H1 (cell line): ENCODE measurements at regions of chr17 and their contacts with region 1.

Region 1: DNA sequence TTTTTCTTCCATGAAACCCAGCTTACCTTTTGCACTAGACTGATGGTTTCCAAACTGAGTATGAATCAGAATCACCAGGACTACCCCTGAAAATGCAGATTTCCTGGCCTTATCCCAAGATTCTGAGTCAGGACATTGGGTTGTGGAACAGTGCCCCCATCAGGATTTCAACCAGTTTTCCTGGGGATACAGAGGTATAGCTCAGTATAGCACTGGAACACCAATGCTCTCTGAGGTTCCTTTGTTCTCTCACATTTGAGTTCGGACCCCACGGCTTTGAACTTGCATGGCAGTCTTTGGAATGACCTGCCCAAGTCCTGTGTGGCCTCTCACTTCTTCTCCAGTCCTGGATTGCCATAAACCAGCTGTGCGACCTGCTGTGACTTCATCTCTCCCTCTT is 12.8 kb upstream of the CCL8 start:
- DNase-seq: peak; percentile 19 to 51
- H3K4me3 ChIP-seq: no peak overlapping the region
- H3K27ac ChIP-seq: no peak overlapping the region
- H3K4me1 ChIP-seq: no peaks in the 10 kb centered on the region
- H3K27me3 ChIP-seq: no peaks in the 10 kb centered on the region
- CTCF ChIP-seq: peak in 2 of 3 experiments; percentile 79 to 91; a peak in 3 of 4 replicates
- EP300 ChIP-seq: no peak
- POLR2A ChIP-seq: no peak
- RAD21 ChIP-seq: peak; percentile 90 to 93

Region 2: GRCh38 chr17:34318474-34318873 is 12.0 kb after region 1 on chr17:
- CTCF ChIA-PET with region 1: interaction called, 15 read pairs
- POLR2A ChIA-PET with region 1: no interaction called
- DNase-seq: peak in 1 of 2 experiments; percentile 56
- H3K4me3 ChIP-seq: no peak overlapping the region
- H3K27ac ChIP-seq: no peak overlapping the region
- H3K4me1 ChIP-seq: no peaks in the 10 kb centered on the region
- H3K27me3 ChIP-seq: no peaks in the 10 kb centered on the region
- CTCF ChIP-seq: peak; percentile 7 to 43 (median 39); a peak in 3 of 4 replicates
- EP300 ChIP-seq: no peak
- POLR2A ChIP-seq: no peak
- RAD21 ChIP-seq: peak; percentile 12 to 30; a peak in 3 of 4 replicates

Region 3: DNA sequence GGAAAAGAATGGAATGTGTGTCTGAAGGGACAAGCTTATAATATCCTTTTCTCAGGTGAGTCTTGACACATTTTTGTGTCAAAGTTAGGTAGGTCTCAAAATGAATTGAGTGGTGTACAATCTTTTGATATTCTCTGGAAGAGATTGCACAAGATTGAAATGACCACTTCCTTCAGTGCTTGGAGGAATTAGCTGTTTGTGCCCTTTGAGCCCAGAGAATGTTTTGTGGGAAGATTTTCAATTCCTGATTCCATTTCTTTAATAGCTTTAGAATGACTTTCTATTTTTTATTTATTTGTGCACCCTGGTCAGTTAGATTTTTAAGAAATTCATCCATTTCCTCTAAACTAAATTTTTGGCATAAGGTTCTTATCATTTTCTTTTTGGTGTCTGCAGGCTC is 48.2 kb after region 1 on chr17:
- CTCF ChIA-PET with region 1: interaction called, 136 read pairs
- POLR2A ChIA-PET with region 1: no interaction called
- DNase-seq: no peak
- H3K4me3 ChIP-seq: no peak overlapping the region
- H3K27ac ChIP-seq: no peak overlapping the region
- H3K4me1 ChIP-seq: peaks cover 0 to 3% (median 0%) of the 10 kb centered on the region in 4 experiments; a peak in 1 of 7 replicates
- H3K27me3 ChIP-seq: no peaks in the 10 kb centered on the region
- CTCF ChIP-seq: no peak
- EP300 ChIP-seq: no peak
- POLR2A ChIP-seq: no peak
- RAD21 ChIP-seq: no peak

Region 4: DNA sequence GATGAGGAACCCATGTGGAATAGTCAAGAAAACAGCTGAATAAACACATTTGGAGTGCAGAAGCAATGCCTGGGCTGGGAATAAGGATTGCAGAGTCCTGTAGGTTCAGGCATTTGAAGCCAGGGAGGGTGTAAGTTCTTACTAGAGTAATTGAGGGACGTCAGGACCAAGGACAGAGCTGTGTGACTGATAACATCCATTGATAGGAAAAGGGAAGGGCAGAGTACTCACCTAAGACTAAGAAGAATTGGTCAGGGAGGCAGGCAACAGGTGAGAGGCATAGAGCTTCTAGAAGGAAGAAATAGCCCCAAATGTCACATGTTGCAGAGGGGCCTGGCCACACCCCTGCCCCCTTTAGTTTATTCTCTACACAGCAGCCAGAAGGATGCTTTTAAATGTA is 193.1 kb after region 1 on chr17:
- CTCF ChIA-PET with region 1: no interaction called
- POLR2A ChIA-PET with region 1: no interaction called
- DNase-seq: peak in 1 of 2 experiments; percentile 53
- H3K4me3 ChIP-seq: no peak overlapping the region
- H3K27ac ChIP-seq: no peak overlapping the region
- H3K4me1 ChIP-seq: no peaks in the 10 kb centered on the region
- H3K27me3 ChIP-seq: peaks cover 0 to 15% (median 1%) of the 10 kb centered on the region in 4 experiments; a peak in 4 of 7 replicates
- CTCF ChIP-seq: no peak
- EP300 ChIP-seq: no peak
- POLR2A ChIP-seq: no peak
- RAD21 ChIP-seq: no peak